Cardiac septum (tissue), 1 donor: ENCODE measurements at regions of chr2 and their contacts with region 1.

Region 1: GRCh38 chr2:56522605-56523089 is 338.9 kb downstream of the CCDC85A start:
- DNase-seq: peak; percentile 74

Region 2: GRCh38 chr2:56191683-56192082 is 331.0 kb before region 1 on chr2:
- intact Hi-C with region 1: loop called (anchors 10 kb)
- DNase-seq: no peak

Region 3: GRCh38 chr2:56749152-56749752 is 226.6 kb after region 1 on chr2:
- intact Hi-C with region 1: loop called (anchors 10 kb)
- DNase-seq: no peak